Left ventricle myocardium inferior (tissue), 1 donor: ENCODE measurements at regions of chr6 and their contacts with region 1.

Region 1: GRCh38 chr6:118283766-118284165 is 264.3 kb upstream of the PLN start:
- DNase-seq: no peak
- H3K4me3 ChIP-seq: peak overlapping the region; percentile 38
- H3K27ac ChIP-seq: peak overlapping the region; percentile 88
- H3K4me1 ChIP-seq: peaks cover 33% of the 10 kb centered on the region
- H3K27me3 ChIP-seq: no peaks in the 10 kb centered on the region
- CTCF ChIP-seq: peak; percentile 86

Region 2: GRCh38 chr6:118514689-118515088 is 230.9 kb after region 1 on chr6:
- intact Hi-C with region 1: loop called (anchors 5 kb)
- DNase-seq: peak; percentile 32
- H3K4me3 ChIP-seq: peak overlapping the region; percentile 50
- H3K27ac ChIP-seq: peak overlapping the region; percentile 87
- H3K4me1 ChIP-seq: peaks cover 10% of the 10 kb centered on the region
- H3K27me3 ChIP-seq: no peaks in the 10 kb centered on the region
- CTCF ChIP-seq: no peak

Region 3: DNA sequence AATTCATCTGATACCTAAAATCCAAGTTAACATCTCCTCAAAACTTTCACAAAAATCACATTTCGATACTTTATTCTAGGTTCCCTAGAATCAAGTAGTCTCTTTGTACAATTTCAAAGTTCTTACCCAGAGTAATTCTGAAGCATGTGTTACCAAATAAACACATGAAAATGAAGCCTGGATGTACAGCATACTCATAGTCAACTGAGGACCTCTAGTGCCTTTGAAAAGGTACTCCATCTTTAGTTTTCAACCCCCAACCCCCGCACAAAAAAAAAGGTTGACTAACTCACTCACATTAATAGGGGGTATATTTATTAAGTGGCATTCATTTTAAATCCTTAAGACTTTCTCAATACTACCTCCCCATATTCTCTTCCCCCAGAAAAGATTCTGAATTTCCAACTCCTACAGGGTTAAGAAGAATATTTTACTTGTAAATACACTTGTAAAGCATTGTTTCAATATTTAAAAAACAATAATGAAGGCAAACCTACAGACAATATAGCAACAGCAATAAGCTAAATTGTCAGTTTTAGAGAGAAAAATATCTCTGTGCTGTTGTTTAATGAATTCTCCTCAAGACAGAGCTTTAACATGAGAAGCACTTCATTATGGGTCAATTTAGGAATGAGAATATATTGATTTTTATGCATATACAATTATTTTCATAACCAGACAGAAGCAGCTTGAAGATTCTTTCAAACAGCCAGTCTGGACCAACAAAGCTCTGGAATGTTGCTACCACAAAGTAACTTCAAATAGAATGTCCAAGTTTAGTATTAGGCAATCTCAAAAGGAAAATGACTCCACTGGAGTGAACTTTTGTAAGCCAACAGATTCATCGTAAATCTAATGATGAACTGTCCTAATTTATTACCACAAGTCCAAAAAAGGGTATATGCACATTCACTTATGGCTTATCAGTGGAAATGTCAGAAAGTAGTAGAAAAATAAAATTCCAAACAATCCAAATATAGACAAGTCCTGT is 267.6 kb after region 1 on chr6:
- intact Hi-C with region 1: loop called (anchors 10 kb)
- DNase-seq: no peak
- H3K4me3 ChIP-seq: peak overlapping the region; percentile 63
- H3K27ac ChIP-seq: peak overlapping the region; percentile 82
- H3K4me1 ChIP-seq: peaks cover 54% of the 10 kb centered on the region
- H3K27me3 ChIP-seq: no peaks in the 10 kb centered on the region
- CTCF ChIP-seq: peak; percentile 66

Region 4: GRCh38 chr6:118580585-118581419 is 297.0 kb after region 1 on chr6:
- intact Hi-C with region 1: loop called (anchors 10 kb)
- DNase-seq: no peak
- H3K4me3 ChIP-seq: no peak overlapping the region
- H3K27ac ChIP-seq: no peak overlapping the region
- H3K4me1 ChIP-seq: peaks cover 21% of the 10 kb centered on the region
- H3K27me3 ChIP-seq: no peaks in the 10 kb centered on the region
- CTCF ChIP-seq: peak; percentile 79

Region 5: DNA sequence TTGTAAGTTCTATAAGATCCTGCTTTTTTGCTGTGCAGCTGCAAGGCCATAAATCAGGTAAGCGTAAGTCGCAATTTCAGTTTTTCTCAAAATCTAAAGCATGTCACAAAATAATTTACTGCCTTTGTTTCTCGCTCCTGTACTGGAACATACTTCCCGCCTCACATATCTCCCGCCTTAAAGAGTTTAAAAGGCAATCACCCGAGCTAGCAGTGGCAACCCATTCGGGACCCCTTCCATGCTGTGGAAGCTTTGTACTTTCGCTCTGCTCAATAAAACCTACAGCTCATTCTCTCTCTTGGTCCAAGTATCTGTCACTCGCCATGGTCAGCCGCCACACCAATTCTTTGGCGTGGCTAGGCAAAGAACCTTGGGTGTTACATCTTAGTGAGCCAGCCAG is 333.7 kb after region 1 on chr6:
- intact Hi-C with region 1: no loop called
- DNase-seq: no peak
- H3K4me3 ChIP-seq: no peak overlapping the region
- H3K27ac ChIP-seq: no peak overlapping the region
- H3K4me1 ChIP-seq: peaks cover 40% of the 10 kb centered on the region
- H3K27me3 ChIP-seq: no peaks in the 10 kb centered on the region
- CTCF ChIP-seq: no peak

Region 6: DNA sequence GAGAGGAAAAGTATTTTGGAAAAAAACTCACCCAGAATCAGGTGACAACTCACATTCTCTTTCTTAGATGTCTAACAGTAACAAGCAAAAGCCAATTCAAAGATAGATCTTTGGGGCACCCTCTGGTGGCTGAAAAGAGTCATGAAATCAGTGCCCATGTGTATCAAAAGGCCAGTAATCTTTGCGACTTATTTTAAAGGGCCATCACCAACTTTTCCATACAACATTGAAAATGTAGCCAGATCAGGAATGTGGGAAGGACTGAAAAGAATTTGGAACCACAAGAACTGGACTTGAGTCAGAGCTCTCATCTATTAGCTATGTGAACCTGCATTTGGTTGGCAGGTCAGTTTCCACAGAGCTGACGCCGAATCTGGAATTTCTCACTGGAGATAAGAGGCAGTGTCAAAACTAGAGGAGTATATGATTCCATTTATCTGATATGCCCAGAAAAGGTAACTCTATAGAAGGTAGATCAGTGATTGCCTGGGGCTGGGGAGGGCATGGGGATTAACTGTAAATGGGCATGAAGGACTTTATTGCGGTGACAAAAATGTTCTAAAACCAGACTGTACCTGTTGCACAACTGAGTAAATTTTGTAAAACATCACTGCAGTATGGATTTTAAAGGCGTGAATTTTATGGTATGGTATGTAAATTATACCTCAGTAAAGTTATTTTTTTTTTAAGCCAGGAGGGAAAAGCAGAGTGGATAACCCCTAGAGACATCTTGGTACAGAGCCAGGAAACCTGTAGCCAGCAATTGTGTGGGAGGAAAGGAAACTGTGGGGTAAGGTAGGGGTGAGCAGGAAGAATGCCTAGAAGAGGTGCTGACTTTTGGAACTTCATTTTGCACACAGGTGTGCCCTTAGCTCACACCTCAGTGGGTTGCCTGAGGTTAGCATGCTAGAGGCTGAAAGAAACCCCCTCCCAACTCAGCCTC is 493.1 kb after region 1 on chr6:
- intact Hi-C with region 1: loop called (anchors 10 kb)
- DNase-seq: peak; percentile 29
- H3K4me3 ChIP-seq: peak overlapping the region; percentile 41
- H3K27ac ChIP-seq: no peak overlapping the region
- H3K4me1 ChIP-seq: peaks cover 12% of the 10 kb centered on the region
- H3K27me3 ChIP-seq: no peaks in the 10 kb centered on the region
- CTCF ChIP-seq: peak; percentile 81